ENCODE measurements at regions of chr1 and their contacts with region 1.

Region 1: GRCh38 chr1:101438359-101438758 is 201.5 kb downstream of the S1PR1 start:
- DNase-seq: no peak
- ATAC-seq: peak; percentile 29
- H3K4me3 Mint-ChIP-seq: no peak overlapping the region
- H3K27ac Mint-ChIP-seq: no peak overlapping the region
- H3K4me1 Mint-ChIP-seq: peaks cover 42% of the 10 kb centered on the region
- H3K27me3 Mint-ChIP-seq: no peaks in the 10 kb centered on the region
- CTCF ChIP-seq: no peak

Region 2: DNA sequence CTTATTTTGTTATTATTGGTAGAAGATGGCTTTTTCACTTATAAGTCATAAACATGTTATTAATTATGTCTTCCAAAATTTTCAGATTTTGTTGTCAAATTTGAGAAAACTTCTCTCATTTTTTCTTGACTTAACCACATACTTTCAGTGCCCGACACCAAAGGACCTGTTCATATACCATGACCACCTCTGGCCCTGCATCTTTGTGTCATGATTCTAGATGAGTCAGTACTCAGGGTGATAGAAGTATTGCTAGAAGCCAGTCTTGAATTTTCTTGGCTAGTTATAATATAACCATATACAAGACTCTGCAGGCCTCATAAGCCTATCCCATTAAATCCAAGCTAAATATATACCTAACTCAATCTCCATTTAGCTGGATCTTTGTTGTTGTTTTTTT is 377.4 kb before region 1 on chr1:
- CTCF ChIA-PET with region 1: no interaction called
- POLR2A ChIA-PET with region 1: no interaction called
- intact Hi-C with region 1: loop called (anchors 10 kb)
- DNase-seq: no peak
- ATAC-seq: peak; percentile 68
- H3K4me3 Mint-ChIP-seq: no peak overlapping the region
- H3K27ac Mint-ChIP-seq: peak overlapping the region; percentile 72
- H3K4me1 Mint-ChIP-seq: peaks cover 61% of the 10 kb centered on the region
- H3K27me3 Mint-ChIP-seq: no peaks in the 10 kb centered on the region
- CTCF ChIP-seq: no peak

Region 3: GRCh38 chr1:101293461-101294051 is 144.8 kb before region 1 on chr1:
- CTCF ChIA-PET with region 1: interaction called, 20 read pairs
- POLR2A ChIA-PET with region 1: interaction called, 12 read pairs
- intact Hi-C with region 1: loop called (anchors 1 kb)
- DNase-seq: no peak
- ATAC-seq: peak; percentile 80
- H3K4me3 Mint-ChIP-seq: peak overlapping the region; percentile 47
- H3K27ac Mint-ChIP-seq: peak overlapping the region; percentile 88
- H3K4me1 Mint-ChIP-seq: peaks cover 60% of the 10 kb centered on the region
- H3K27me3 Mint-ChIP-seq: no peaks in the 10 kb centered on the region
- CTCF ChIP-seq: no peak

Region 4: GRCh38 chr1:101357444-101357986 is 80.8 kb before region 1 on chr1:
- CTCF ChIA-PET with region 1: interaction called, 36 read pairs
- POLR2A ChIA-PET with region 1: no interaction called
- intact Hi-C with region 1: loop called (anchors 1 kb)
- DNase-seq: no peak
- ATAC-seq: peak; percentile 99
- H3K4me3 Mint-ChIP-seq: no peak overlapping the region
- H3K27ac Mint-ChIP-seq: no peak overlapping the region
- H3K4me1 Mint-ChIP-seq: peaks cover 9% of the 10 kb centered on the region
- H3K27me3 Mint-ChIP-seq: no peaks in the 10 kb centered on the region
- CTCF ChIP-seq: no peak